Activated naive CD4-positive, alpha-beta T cell treated with anti-CD3 and anti-CD28 coated beads for 36 hours (primary cell): ENCODE measurements at regions of chr7 and their contacts with region 1.

Region 1: GRCh38 chr7:137961200-137962177 is 40.4 kb downstream of the CREB3L2 start:
- DNase-seq: peak; percentile 65
- H3K4me3 Mint-ChIP-seq: no peak overlapping the region
- H3K27ac Mint-ChIP-seq: no peak overlapping the region
- H3K4me1 Mint-ChIP-seq: peaks cover 22% of the 10 kb centered on the region
- H3K27me3 Mint-ChIP-seq: no peaks in the 10 kb centered on the region

Region 2: DNA sequence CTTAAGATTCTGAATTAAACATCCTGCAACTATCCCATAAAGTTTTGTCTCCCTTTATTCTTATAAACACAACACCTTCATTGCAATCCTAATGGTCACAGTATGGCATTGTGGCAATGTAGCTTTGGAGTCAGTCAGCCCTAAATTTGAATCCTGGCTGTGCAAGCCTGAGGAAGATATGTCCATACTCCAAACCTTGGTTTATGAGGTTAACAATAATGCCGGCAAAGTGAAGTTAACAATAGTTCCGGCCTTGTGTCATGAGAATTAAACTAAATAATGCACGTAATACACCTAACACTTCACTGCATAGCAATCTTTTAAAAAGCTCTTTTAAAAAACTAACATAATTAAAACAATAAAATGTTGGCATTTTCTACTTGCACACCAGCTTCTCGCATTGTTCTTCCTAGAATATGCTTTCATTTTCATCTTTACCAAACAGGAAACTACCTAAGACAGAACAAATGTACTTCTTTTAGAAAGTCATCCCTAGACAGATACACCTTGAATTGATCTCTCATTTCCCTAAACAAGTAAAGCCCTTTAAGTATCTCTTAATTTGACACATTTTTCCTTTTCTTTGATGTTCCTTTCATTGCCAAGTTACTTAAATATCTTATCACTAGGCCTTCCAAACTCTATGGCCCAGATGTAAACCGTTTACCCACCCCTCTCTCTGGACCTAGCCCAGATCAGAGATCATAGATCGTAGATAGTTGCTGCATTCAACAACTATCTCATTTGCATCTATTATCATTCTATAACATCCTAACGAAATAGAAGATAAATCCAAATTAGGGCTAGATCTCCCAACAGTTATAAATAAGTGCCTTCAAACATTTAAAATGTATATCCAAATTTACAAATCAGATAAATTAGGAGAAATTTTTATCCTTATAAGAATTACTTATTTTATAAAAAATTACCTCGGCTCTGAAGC is 26.3 kb before region 1 on chr7:
- CTCF ChIA-PET with region 1: no interaction called
- intact Hi-C with region 1: loop called (anchors 1 kb)
- DNase-seq: no peak
- H3K4me3 Mint-ChIP-seq: peak overlapping the region; percentile 54
- H3K27ac Mint-ChIP-seq: peak overlapping the region; percentile 76
- H3K4me1 Mint-ChIP-seq: peaks cover 44% of the 10 kb centered on the region
- H3K27me3 Mint-ChIP-seq: no peaks in the 10 kb centered on the region

Region 3: GRCh38 chr7:137975768-137976167 is 14.3 kb after region 1 on chr7:
- CTCF ChIA-PET with region 1: no interaction called
- intact Hi-C with region 1: loop called (anchors 2 kb)
- DNase-seq: no peak
- H3K4me3 Mint-ChIP-seq: no peak overlapping the region
- H3K27ac Mint-ChIP-seq: no peak overlapping the region
- H3K4me1 Mint-ChIP-seq: no peaks in the 10 kb centered on the region
- H3K27me3 Mint-ChIP-seq: no peaks in the 10 kb centered on the region

Region 4: DNA sequence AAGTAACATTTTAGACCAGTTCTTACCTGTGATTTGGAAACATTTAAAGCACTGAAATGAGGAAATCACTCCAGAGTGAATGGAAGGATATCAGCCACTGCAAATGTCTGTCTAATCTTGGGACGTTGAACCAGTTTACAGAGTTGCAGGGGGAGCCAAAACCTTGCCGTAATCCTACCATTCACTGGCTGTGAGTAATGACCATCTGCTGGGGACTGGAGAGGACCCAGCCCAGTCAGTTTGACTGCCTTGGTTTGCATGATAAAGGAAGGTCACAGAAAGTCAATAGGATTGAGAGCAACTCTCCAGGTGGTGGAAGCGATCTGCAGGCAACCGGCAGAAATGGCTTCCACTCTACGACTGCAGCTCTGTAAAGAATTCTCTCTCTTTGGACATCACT is 281.9 kb after region 1 on chr7:
- CTCF ChIA-PET with region 1: no interaction called
- intact Hi-C with region 1: no loop called
- DNase-seq: no peak
- H3K4me3 Mint-ChIP-seq: no peak overlapping the region
- H3K27ac Mint-ChIP-seq: no peak overlapping the region
- H3K4me1 Mint-ChIP-seq: no peaks in the 10 kb centered on the region
- H3K27me3 Mint-ChIP-seq: no peaks in the 10 kb centered on the region